ENCODE measurements at regions of chr2 and their contacts with region 1.

Region 1: DNA sequence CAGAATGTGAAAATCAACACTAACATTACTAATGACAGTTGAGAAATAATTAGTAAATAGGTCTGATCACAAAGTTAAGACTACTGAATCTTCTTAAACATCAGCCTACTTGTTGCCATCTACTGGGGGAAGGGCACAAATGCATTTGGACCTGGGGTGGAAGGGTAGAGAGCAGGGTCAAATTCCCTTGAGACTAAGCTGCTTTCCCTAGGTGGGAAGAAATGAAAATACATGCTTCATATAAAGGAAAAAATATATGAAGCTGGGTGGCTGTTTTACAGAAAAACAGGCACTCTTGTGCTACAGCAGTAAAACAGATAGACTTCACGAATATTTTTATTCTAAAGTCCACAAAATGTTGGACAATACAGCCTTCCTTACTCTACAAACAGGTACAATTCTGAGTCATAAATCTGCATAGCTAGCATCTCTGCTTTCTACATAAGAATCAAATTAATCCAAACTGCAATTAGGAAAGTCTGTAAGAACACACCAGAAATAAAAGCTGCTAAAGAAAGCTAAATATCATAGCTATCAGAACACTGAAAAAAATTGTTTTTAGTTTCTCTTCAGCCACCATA is 10.9 kb downstream of the TRIP12 start:
- DNase-seq: no peak
- ATAC-seq: peak; percentile 82
- H3K4me3 ChIP-seq: peak overlapping the region; percentile 2; the same call in 1 of the 2 replicates
- H3K27ac ChIP-seq: 0 out of 2 replicates have a peak overlapping the region, but pooled peaks have one; percentile 3
- H3K4me1 ChIP-seq: peaks cover 41% of the 10 kb centered on the region
- H3K27me3 ChIP-seq: no peaks in the 10 kb centered on the region
- CTCF ChIP-seq: peak; percentile 51 to 60 (median 54)
- EP300 ChIP-seq: no peak
- POLR2A ChIP-seq: no peak
- RAD21 ChIP-seq: peak; percentile 49

Region 2: DNA sequence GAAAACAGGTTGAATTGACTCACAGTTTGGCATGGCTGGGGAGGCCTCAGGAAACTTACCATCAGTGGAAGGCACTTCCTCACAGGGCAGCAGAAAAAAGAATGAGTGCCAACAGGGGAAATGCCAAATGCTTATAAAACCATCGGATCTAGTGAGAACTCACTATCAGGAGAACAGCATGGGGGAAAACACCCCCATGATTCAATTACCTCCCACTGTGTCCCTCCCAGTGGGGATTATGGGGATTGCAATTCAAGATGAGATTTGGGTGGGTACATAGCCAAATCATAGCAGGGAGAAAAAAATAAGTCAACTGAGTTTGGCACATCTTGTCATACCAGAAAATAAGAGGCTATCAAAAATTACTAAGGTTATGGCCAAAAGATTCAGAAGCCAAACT is 85.4 kb before region 1 on chr2:
- CTCF ChIA-PET with region 1: interaction called, 4 read pairs
- POLR2A ChIA-PET with region 1: no interaction called
- RAD21 ChIA-PET with region 1: interaction called, 12 read pairs
- SMC1A ChIA-PET with region 1: interaction called, 6 read pairs
- in situ Hi-C with region 1: no loop called
- intact Hi-C with region 1: no loop called
- DNase-seq: no peak
- ATAC-seq: no peak
- H3K4me3 ChIP-seq: no peak overlapping the region
- H3K27ac ChIP-seq: no peak overlapping the region
- H3K4me1 ChIP-seq: peaks cover 20% of the 10 kb centered on the region
- H3K27me3 ChIP-seq: no peaks in the 10 kb centered on the region
- CTCF ChIP-seq: 0 out of 6 replicates have a peak, but pooled peaks of 1 of the 3 experiments have one; percentile 9
- EP300 ChIP-seq: no peak
- POLR2A ChIP-seq: no peak
- RAD21 ChIP-seq: no peak

Region 3: GRCh38 chr2:229852565-229852964 is 58.4 kb before region 1 on chr2:
- CTCF ChIA-PET with region 1: interaction called, 14 read pairs
- POLR2A ChIA-PET with region 1: no interaction called
- RAD21 ChIA-PET with region 1: interaction called, 12 read pairs
- SMC1A ChIA-PET with region 1: interaction called, 7 read pairs
- in situ Hi-C with region 1: no loop called
- intact Hi-C with region 1: no loop called
- DNase-seq: peak; percentile 42
- ATAC-seq: peak; percentile 84
- H3K4me3 ChIP-seq: no peak overlapping the region
- H3K27ac ChIP-seq: no peak overlapping the region; the same call in 1 of the 2 replicates
- H3K4me1 ChIP-seq: peaks cover 6% of the 10 kb centered on the region; the same call in 1 of the 2 replicates
- H3K27me3 ChIP-seq: no peaks in the 10 kb centered on the region
- CTCF ChIP-seq: no peak
- EP300 ChIP-seq: no peak
- POLR2A ChIP-seq: no peak
- RAD21 ChIP-seq: no peak

Region 4: GRCh38 chr2:229869226-229869625 is 41.7 kb before region 1 on chr2:
- CTCF ChIA-PET with region 1: interaction called, 7 read pairs
- POLR2A ChIA-PET with region 1: interaction called, 3 read pairs
- RAD21 ChIA-PET with region 1: interaction called, 3 read pairs
- SMC1A ChIA-PET with region 1: interaction called, 11 read pairs
- in situ Hi-C with region 1: no loop called
- intact Hi-C with region 1: no loop called
- DNase-seq: no peak
- ATAC-seq: peak; percentile 73
- H3K4me3 ChIP-seq: no peak overlapping the region
- H3K27ac ChIP-seq: no peak overlapping the region
- H3K4me1 ChIP-seq: peaks cover 11% of the 10 kb centered on the region; the same call in 1 of the 2 replicates
- H3K27me3 ChIP-seq: no peaks in the 10 kb centered on the region
- CTCF ChIP-seq: no peak
- EP300 ChIP-seq: peak; percentile 52 to 61; a peak in 2 of 4 replicates
- POLR2A ChIP-seq: no peak
- RAD21 ChIP-seq: no peak

Region 5: GRCh38 chr2:229921892-229922445 is 11.0 kb after region 1 on chr2 and contains the start of gene TRIP12:
- CTCF ChIA-PET with region 1: interaction called, 31 read pairs
- POLR2A ChIA-PET with region 1: interaction called, 11 read pairs
- RAD21 ChIA-PET with region 1: interaction called, 16 read pairs
- SMC1A ChIA-PET with region 1: interaction called, 9 read pairs
- in situ Hi-C with region 1: no loop called
- intact Hi-C with region 1: no loop called
- DNase-seq: peak; percentile 88
- ATAC-seq: peak; percentile 84
- H3K4me3 ChIP-seq: peak within 1 kb of the TSS; percentile 83
- H3K27ac ChIP-seq: peak within 1 kb of the TSS; percentile 98
- H3K4me1 ChIP-seq: no peaks in the 10 kb centered on the region
- H3K27me3 ChIP-seq: no peaks in the 10 kb centered on the region
- CTCF ChIP-seq: no peak
- EP300 ChIP-seq: peak in 1 of 2 experiments; percentile 26; a peak in 1 of 4 replicates
- POLR2A ChIP-seq: peak; percentile 63
- RAD21 ChIP-seq: no peak
- polyA plus RNA-seq, gene TRIP12: 23.1 to 23.9 TPM

Measured in GM12878 (cell line).